ENCODE measurements at regions of chr19 and their contacts with region 1.

Region 1: DNA sequence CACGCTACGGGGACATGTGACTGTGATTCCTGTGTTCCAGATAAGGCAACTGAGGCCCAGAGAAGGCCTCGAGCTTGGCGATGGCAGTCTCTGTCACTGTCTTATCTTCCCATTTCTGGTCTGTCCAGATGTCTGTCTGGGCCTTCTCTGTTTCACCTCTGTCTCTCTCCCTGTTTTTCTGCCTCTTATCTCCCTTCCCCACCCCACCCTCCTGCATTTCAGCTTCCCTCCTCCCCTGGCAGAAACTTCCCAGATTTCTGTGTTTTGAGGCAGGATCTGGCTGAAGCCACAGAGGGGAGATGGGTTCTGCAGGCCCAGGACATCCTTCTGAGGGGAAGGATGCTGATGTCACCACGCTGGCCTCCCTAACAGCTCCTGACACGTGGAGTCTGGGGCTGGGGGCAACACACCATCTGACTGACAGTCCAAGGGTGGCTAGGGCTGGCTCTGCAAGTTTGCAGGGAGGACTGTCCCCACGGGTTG is 14.4 kb downstream of the PAK4 start:
- DNase-seq: no peak
- H3K4me3 ChIP-seq: no peak overlapping the region
- H3K27ac ChIP-seq: no peak overlapping the region
- H3K4me1 ChIP-seq: no peaks in the 10 kb centered on the region
- CTCF ChIP-seq: no peak

Region 2: GRCh38 chr19:39160334-39160791 is 20.4 kb after region 1 on chr19:
- CTCF ChIA-PET with region 1: interaction called, 10 read pairs
- POLR2A ChIA-PET with region 1: no interaction called
- intact Hi-C with region 1: no loop called
- DNase-seq: no peak
- H3K4me3 ChIP-seq: no peak overlapping the region
- H3K27ac ChIP-seq: no peak overlapping the region
- H3K4me1 ChIP-seq: no peaks in the 10 kb centered on the region
- CTCF ChIP-seq: no peak